Uterus (tissue), 4 donors: ENCODE measurements at regions of chr11 and their contacts with region 1.

Region 1: DNA sequence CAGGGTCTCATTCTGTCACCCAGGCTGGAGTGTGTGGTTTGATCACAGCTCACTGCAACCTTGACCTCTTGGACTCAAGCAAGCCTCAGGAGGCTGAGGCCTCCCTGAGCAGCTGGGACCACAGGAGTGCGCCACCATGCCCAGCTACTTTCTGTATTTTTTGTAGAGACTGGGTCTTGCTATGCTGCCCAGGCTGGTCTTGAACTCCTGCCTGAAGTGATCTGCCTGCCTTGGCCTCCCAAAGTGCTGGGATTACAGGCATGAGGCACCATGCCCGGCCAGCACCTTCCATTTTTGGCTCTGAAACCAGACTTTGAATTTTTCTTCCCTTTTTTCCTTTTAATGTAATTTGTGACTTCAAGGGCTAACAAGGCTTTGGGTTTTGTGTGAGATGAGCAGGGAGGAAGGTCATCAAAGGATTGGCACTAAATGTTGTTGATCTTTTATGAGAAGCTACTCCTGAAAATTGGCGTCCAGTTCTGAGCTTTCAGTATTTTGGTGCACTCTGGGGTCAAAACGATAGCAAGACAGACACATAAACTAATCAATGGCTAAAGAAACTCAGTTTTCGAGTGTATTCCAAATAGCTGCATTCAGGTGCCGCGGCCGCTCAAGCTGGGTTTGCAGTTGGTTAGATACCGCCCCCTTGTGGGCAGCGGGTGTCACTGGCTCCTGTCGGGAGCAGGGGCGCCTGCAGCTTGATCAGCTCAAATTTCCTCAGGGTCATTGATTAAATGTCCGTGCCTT is 51.9 kb upstream of the CLMP start:
- DNase-seq: peak; percentile 80 to 83
- H3K4me3 ChIP-seq: no peak overlapping the region
- H3K27ac ChIP-seq: no peak overlapping the region
- H3K4me1 ChIP-seq: no peaks in the 10 kb centered on the region
- H3K27me3 ChIP-seq: no peaks in the 10 kb centered on the region
- CTCF ChIP-seq: peak; percentile 84 to 98 (median 94)
- POLR2A ChIP-seq: no peak

Region 2: GRCh38 chr11:123110356-123110755 is 136.6 kb before region 1 on chr11:
- intact Hi-C with region 1: loop called (anchors 5 kb)
- DNase-seq: no peak
- H3K4me3 ChIP-seq: no peak overlapping the region
- H3K27ac ChIP-seq: no peak overlapping the region
- H3K4me1 ChIP-seq: no peaks in the 10 kb centered on the region
- H3K27me3 ChIP-seq: no peaks in the 10 kb centered on the region
- CTCF ChIP-seq: no peak
- POLR2A ChIP-seq: no peak

Region 3: GRCh38 chr11:123166071-123166559 is 80.8 kb before region 1 on chr11:
- intact Hi-C with region 1: loop called (anchors 10 kb)
- DNase-seq: peak; percentile 75 to 89
- H3K4me3 ChIP-seq: no peak overlapping the region
- H3K27ac ChIP-seq: peak overlapping the region; percentile 75 to 80
- H3K4me1 ChIP-seq: peaks cover 0 to 4% of the 10 kb centered on the region in 2 donors
- H3K27me3 ChIP-seq: no peaks in the 10 kb centered on the region
- CTCF ChIP-seq: peak; percentile 53 to 69 (median 62)
- POLR2A ChIP-seq: no peak